CD8-positive, alpha-beta T cell (primary cell): ENCODE measurements at regions of chr12 and their contacts with region 1.

Region 1: DNA sequence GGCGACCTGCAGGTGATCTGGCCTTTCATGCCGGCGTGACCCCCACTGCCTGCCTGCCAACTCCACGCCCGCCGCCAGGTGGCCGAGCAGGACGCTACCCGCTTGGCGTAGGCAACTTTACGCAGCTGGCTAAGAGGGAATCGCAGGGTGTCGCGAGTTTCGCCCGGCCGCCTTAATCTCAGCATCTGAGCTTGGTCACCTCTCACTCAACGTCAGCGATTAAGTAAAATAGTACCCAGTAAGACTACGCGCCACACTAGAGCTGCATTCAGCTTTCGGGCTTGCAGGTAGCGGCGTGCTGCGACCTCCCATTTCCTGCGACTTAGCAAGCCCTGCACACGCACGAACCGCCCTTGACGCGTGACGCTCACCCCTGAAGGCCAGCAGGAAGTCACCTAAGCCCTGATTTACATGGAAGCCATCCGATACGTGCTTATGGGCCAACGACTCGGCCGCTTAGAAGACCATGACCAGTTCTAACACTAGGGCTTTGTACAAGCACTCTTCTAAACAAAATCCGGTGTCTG is 33.2 kb downstream of the WBP11 start:
- DNase-seq: peak; percentile 69 to 97 (median 86)
- ATAC-seq: peak; percentile 51
- H3K4me3 ChIP-seq: peak overlapping the region; percentile 81 to 91
- H3K4me3 Mint-ChIP-seq: peak overlapping the region; percentile 99
- H3K27ac ChIP-seq: peak overlapping the region; percentile 95 to 99
- H3K27ac Mint-ChIP-seq: peak overlapping the region; percentile 99
- H3K4me1 ChIP-seq: peaks cover 35% of the 10 kb centered on the region
- H3K4me1 Mint-ChIP-seq: peaks cover 61% of the 10 kb centered on the region
- H3K27me3 ChIP-seq: no peaks in the 10 kb centered on the region
- H3K27me3 Mint-ChIP-seq: no peaks in the 10 kb centered on the region
- CTCF ChIP-seq: peak; percentile 79

Region 2: GRCh38 chr12:13100882-13101769 is 1668.9 kb before region 1 on chr12:
- CTCF ChIA-PET with region 1: no interaction called
- POLR2A ChIA-PET with region 1: no interaction called
- intact Hi-C with region 1: loop called in 1 of 2 experiments (anchors 10 kb)
- DNase-seq: peak; percentile 86 to 97 (median 93)
- ATAC-seq: peak; percentile 87
- H3K4me3 ChIP-seq: peak overlapping the region; percentile 55 to 77
- H3K4me3 Mint-ChIP-seq: peak overlapping the region; percentile 81
- H3K27ac ChIP-seq: peak overlapping the region; percentile 83 to 95
- H3K27ac Mint-ChIP-seq: peak overlapping the region; percentile 89
- H3K4me1 ChIP-seq: peaks cover 27% of the 10 kb centered on the region
- H3K4me1 Mint-ChIP-seq: peaks cover 36% of the 10 kb centered on the region
- H3K27me3 ChIP-seq: no peaks in the 10 kb centered on the region
- H3K27me3 Mint-ChIP-seq: no peaks in the 10 kb centered on the region
- CTCF ChIP-seq: no peak

Region 3: DNA sequence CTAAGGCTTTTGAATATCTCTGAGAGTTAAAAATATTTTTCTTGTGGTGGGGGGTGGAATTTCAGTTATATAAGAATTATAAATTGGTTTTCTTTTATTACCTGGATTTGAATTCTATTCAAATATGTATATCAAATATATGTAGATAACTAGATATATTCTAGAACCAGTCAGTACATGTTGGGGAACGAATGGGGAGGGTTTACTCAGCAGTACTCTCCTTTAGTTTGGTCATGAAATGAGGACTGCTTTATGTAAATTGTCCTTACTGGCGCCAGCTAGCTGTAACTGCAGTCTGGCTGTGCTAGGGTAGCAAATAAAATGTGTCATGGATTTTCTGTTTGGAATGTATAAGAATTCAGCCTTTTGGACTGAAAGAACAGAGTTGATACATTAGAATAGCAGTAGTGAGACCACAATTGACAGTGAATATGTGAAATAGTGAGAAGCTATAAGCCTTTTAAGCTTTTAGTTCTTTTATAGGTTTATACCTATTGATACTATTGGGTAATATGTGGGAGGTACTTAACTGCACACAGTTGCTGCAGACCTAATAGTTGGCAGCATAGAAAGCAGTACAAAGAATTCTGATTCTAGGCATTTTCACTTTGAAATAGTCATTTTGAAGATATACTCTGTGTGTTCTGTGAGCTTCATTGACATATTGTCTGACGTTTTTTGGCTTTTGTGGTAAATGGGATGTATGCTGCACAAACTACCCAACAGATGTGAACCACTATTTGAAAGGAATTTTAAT is 375.5 kb before region 1 on chr12:
- CTCF ChIA-PET with region 1: no interaction called
- POLR2A ChIA-PET with region 1: interaction called, 8 read pairs
- intact Hi-C with region 1: loop called in 1 of 2 experiments (anchors 2 kb)
- DNase-seq: peak in 5 of 9 experiments; percentile 35 to 89 (median 52)
- ATAC-seq: peak; percentile 61
- H3K4me3 ChIP-seq: peak overlapping the region in 1 of 2 experiments; percentile 19
- H3K4me3 Mint-ChIP-seq: peak overlapping the region; percentile 67
- H3K27ac ChIP-seq: peak overlapping the region; percentile 39 to 75
- H3K27ac Mint-ChIP-seq: peak overlapping the region; percentile 84
- H3K4me1 ChIP-seq: peaks cover 90% of the 10 kb centered on the region
- H3K4me1 Mint-ChIP-seq: peaks cover 83% of the 10 kb centered on the region
- H3K27me3 ChIP-seq: no peaks in the 10 kb centered on the region
- H3K27me3 Mint-ChIP-seq: no peaks in the 10 kb centered on the region
- CTCF ChIP-seq: no peak

Region 4: GRCh38 chr12:14782756-14783155 is 12.7 kb after region 1 on chr12:
- CTCF ChIA-PET with region 1: interaction called, 5 read pairs
- POLR2A ChIA-PET with region 1: interaction called, 39 read pairs
- intact Hi-C with region 1: no loop called
- DNase-seq: no peak
- ATAC-seq: no peak
- H3K4me3 ChIP-seq: no peak overlapping the region
- H3K4me3 Mint-ChIP-seq: no peak overlapping the region
- H3K27ac ChIP-seq: no peak overlapping the region
- H3K27ac Mint-ChIP-seq: no peak overlapping the region
- H3K4me1 ChIP-seq: no peaks in the 10 kb centered on the region
- H3K4me1 Mint-ChIP-seq: peaks cover 12% of the 10 kb centered on the region
- H3K27me3 ChIP-seq: no peaks in the 10 kb centered on the region
- H3K27me3 Mint-ChIP-seq: no peaks in the 10 kb centered on the region
- CTCF ChIP-seq: no peak

Region 5: DNA sequence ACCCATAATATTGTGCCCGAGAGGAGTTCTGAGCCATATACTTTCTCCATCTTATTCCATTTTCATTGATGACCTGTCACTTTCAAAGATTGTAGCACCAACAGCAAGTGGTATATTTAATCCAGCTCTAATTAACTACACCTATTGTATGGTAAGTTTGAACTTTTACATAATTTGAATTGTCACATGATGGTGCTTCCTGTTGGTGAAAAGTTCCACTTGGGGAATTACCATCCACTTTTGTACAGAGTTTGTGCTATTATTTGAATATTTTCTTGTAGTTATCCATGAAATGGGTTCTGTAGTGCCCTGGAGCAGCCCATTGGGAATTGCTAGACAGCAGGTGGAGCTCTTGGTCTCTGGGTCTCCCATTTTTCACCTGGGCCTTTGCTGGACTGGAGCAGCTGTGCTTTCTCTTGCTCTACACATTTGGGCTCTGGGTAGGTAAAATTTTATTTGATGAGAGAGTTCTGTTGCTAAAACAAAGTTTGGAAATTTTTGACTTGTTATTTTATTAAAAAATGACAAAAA is 41.0 kb after region 1 on chr12:
- CTCF ChIA-PET with region 1: interaction called, 38 read pairs
- POLR2A ChIA-PET with region 1: interaction called, 184 read pairs
- intact Hi-C with region 1: no loop called
- DNase-seq: peak in 2 of 9 experiments; percentile 7 to 26
- ATAC-seq: no peak
- H3K4me3 ChIP-seq: no peak overlapping the region
- H3K4me3 Mint-ChIP-seq: no peak overlapping the region
- H3K27ac ChIP-seq: no peak overlapping the region
- H3K27ac Mint-ChIP-seq: no peak overlapping the region
- H3K4me1 ChIP-seq: peaks cover 8% of the 10 kb centered on the region
- H3K4me1 Mint-ChIP-seq: peaks cover 13% of the 10 kb centered on the region
- H3K27me3 ChIP-seq: no peaks in the 10 kb centered on the region
- H3K27me3 Mint-ChIP-seq: no peaks in the 10 kb centered on the region
- CTCF ChIP-seq: no peak

Region 6: GRCh38 chr12:14960548-14961465 is 190.8 kb after region 1 on chr12:
- CTCF ChIA-PET with region 1: interaction called, 5 read pairs
- POLR2A ChIA-PET with region 1: interaction called, 44 read pairs
- intact Hi-C with region 1: loop called (anchors 1 to 2 kb)
- DNase-seq: peak in 8 of 9 experiments; percentile 37 to 82 (median 60)
- ATAC-seq: peak; percentile 37
- H3K4me3 ChIP-seq: peak overlapping the region; percentile 71 to 85
- H3K4me3 Mint-ChIP-seq: peak overlapping the region; percentile 100
- H3K27ac ChIP-seq: peak overlapping the region; percentile 90 to 96
- H3K27ac Mint-ChIP-seq: peak overlapping the region; percentile 99
- H3K4me1 ChIP-seq: peaks cover 49% of the 10 kb centered on the region
- H3K4me1 Mint-ChIP-seq: peaks cover 71% of the 10 kb centered on the region
- H3K27me3 ChIP-seq: no peaks in the 10 kb centered on the region
- H3K27me3 Mint-ChIP-seq: no peaks in the 10 kb centered on the region
- CTCF ChIP-seq: no peak

Region 7: GRCh38 chr12:15882118-15882971 is 1112.3 kb after region 1 on chr12 and contains the start of gene STRAP:
- CTCF ChIA-PET with region 1: no interaction called
- POLR2A ChIA-PET with region 1: no interaction called
- intact Hi-C with region 1: loop called in 1 of 2 experiments (anchors 10 kb)
- DNase-seq: peak; percentile 92 to 98 (median 96)
- ATAC-seq: peak; percentile 94
- H3K4me3 ChIP-seq: peak within 1 kb of the TSS; percentile 85 to 95
- H3K4me3 Mint-ChIP-seq: peak within 1 kb of the TSS; percentile 99
- H3K27ac ChIP-seq: peak within 1 kb of the TSS; percentile 97 to 99
- H3K27ac Mint-ChIP-seq: peak within 1 kb of the TSS; percentile 100
- H3K4me1 ChIP-seq: peaks cover 30% of the 10 kb centered on the region
- H3K4me1 Mint-ChIP-seq: peaks cover 55% of the 10 kb centered on the region
- H3K27me3 ChIP-seq: no peaks in the 10 kb centered on the region
- H3K27me3 Mint-ChIP-seq: no peaks in the 10 kb centered on the region
- CTCF ChIP-seq: no peak
- total RNA-seq, gene STRAP: 180 to 181 TPM